OCI-LY7 (cell line): ENCODE measurements at regions of chr3 and their contacts with region 1.

Region 1: DNA sequence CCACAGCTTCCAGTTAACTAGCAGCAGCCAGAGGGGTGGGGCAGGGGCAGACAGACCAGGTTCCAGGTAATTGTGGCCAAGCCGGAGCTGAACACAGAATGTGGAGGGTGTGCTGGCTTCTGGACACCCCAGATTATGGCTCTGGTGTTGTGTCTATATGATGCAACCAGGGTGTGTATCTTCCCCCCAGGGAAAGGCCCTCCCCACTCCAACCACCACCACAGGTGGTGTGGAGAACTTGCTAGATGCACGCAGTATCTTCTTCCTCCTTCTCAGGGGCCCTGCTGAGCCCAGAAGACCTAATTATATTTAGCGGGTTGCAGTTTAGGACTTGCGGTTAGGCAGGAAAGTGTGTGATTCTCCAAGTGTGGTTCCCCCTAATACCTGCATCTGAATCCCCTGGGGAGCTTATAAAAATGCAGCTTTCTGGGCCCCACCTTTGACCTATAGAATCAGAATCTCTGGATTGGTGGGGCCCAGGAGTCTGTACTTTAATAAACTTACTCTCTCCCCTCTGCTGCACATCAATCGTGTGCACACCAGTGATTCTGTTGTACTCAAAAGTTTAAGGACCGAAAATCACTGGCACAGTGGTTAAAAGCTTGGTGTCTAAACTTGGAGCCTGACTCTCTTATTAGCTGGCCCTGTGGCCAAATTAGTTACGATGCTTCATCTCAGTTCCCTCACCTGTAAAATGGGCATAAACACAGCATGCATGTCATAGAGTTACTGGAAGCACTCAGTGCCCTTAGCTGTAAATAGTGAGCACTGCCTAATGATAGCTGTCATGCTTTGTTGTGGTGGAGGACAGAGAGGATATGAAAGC is 379.1 kb upstream of the PROK2 start:
- DNase-seq: peak; percentile 99
- H3K4me3 ChIP-seq: peak overlapping the region; percentile 45
- H3K27ac ChIP-seq: peak overlapping the region; percentile 90
- H3K4me1 ChIP-seq: peaks cover 52% of the 10 kb centered on the region
- CTCF ChIP-seq: no peak

Region 2: GRCh38 chr3:71955240-71956068 is 208.6 kb before region 1 on chr3:
- CTCF ChIA-PET with region 1: no interaction called
- POLR2A ChIA-PET with region 1: no interaction called
- intact Hi-C with region 1: loop called (anchors 1 kb)
- DNase-seq: peak; percentile 66
- H3K4me3 ChIP-seq: no peak overlapping the region
- H3K27ac ChIP-seq: no peak overlapping the region
- H3K4me1 ChIP-seq: peaks cover 25% of the 10 kb centered on the region
- CTCF ChIP-seq: peak; percentile 91

Region 3: DNA sequence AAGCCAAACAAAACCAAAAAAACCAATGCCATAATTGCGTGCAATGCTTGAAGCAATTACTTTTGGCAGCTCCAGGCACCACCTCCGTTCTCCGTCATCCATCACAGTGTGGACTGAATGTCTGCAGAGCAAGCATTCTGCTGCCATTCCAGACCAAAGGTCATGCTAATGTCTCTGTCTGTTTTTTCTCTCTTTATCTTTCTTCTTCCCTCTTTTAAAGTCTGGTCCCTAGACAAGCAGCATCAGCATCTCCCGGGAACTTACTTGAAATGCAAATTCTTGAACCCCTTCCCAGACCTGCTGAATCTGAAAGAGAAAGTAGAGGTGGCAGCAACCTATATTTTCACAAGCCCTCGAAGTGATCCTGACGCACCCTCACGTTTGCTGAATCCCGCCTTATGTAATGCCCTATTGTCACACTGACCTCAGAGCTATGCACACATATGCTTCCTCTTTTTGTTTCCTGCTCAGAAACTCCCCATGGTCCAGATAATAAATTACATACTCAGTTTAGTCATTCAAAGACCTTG is 81.8 kb before region 1 on chr3:
- CTCF ChIA-PET with region 1: interaction called, 5 read pairs
- POLR2A ChIA-PET with region 1: interaction called, 24 read pairs
- intact Hi-C with region 1: loop called (anchors 1 kb)
- DNase-seq: peak; percentile 80
- H3K4me3 ChIP-seq: peak overlapping the region; percentile 12
- H3K27ac ChIP-seq: peak overlapping the region; percentile 65
- H3K4me1 ChIP-seq: peaks cover 100% of the 10 kb centered on the region
- CTCF ChIP-seq: no peak

Region 4: GRCh38 chr3:72177083-72178050 is 13.3 kb after region 1 on chr3:
- CTCF ChIA-PET with region 1: interaction called, 3 read pairs
- POLR2A ChIA-PET with region 1: interaction called, 16 read pairs
- intact Hi-C with region 1: no loop called
- DNase-seq: peak; percentile 64
- H3K4me3 ChIP-seq: peak overlapping the region; percentile 33
- H3K27ac ChIP-seq: peak overlapping the region; percentile 51
- H3K4me1 ChIP-seq: peaks cover 39% of the 10 kb centered on the region
- CTCF ChIP-seq: no peak

Region 5: GRCh38 chr3:72447059-72447946 is 283.3 kb after region 1 on chr3:
- CTCF ChIA-PET with region 1: no interaction called
- POLR2A ChIA-PET with region 1: interaction called, 4 read pairs
- intact Hi-C with region 1: loop called (anchors 1 kb)
- DNase-seq: peak; percentile 92
- H3K4me3 ChIP-seq: peak overlapping the region; percentile 86
- H3K27ac ChIP-seq: no peak overlapping the region
- H3K4me1 ChIP-seq: peaks cover 42% of the 10 kb centered on the region
- CTCF ChIP-seq: no peak

Region 6: GRCh38 chr3:72818092-72818773 is 654.2 kb after region 1 on chr3:
- CTCF ChIA-PET with region 1: no interaction called
- POLR2A ChIA-PET with region 1: no interaction called
- intact Hi-C with region 1: loop called (anchors 5 kb)
- DNase-seq: peak; percentile 22
- H3K4me3 ChIP-seq: no peak overlapping the region
- H3K27ac ChIP-seq: no peak overlapping the region
- H3K4me1 ChIP-seq: peaks cover 55% of the 10 kb centered on the region
- CTCF ChIP-seq: peak; percentile 85